ENCODE measurements at regions of chr3 and their contacts with region 1.

Region 1: GRCh38 chr3:98209244-98209643 is 42.7 kb downstream of the OR5H15 start:
- DNase-seq: no peak
- ATAC-seq: no peak
- H3K4me3 ChIP-seq: no peak overlapping the region
- H3K27ac ChIP-seq: no peak overlapping the region
- H3K4me1 ChIP-seq: no peaks in the 10 kb centered on the region
- H3K27me3 ChIP-seq: no peaks in the 10 kb centered on the region
- CTCF ChIP-seq: no peak
- POLR2A ChIP-seq: no peak

Region 2: DNA sequence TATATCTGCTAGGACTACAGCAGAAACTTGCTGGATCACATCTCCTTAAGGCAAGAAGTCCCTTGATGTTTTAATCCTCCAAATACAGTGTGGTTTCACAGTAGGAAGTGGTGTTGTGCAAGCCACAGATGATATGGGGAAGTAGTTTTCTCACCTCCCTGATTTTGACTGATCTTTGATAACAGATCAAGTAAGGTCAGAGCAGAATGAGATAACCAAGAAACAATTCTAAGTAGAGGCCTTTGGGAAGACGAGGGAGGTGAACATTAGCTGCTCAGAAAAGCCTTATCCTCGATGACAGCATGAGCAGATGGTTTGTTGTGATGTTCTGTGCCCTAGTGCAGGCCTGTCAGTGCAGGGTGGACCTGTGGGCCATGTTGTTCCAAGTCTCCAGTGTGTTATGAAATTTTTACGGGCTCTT is 298.3 kb before region 1 on chr3:
- intact Hi-C with region 1: no loop called
- DNase-seq: no peak
- ATAC-seq: peak in 2 of 4 donors; percentile 19 to 37
- H3K4me3 ChIP-seq: no peak overlapping the region
- H3K27ac ChIP-seq: no peak overlapping the region
- H3K4me1 ChIP-seq: no peaks in the 10 kb centered on the region
- H3K27me3 ChIP-seq: no peaks in the 10 kb centered on the region
- CTCF ChIP-seq: no peak
- POLR2A ChIP-seq: no peak

Region 3: DNA sequence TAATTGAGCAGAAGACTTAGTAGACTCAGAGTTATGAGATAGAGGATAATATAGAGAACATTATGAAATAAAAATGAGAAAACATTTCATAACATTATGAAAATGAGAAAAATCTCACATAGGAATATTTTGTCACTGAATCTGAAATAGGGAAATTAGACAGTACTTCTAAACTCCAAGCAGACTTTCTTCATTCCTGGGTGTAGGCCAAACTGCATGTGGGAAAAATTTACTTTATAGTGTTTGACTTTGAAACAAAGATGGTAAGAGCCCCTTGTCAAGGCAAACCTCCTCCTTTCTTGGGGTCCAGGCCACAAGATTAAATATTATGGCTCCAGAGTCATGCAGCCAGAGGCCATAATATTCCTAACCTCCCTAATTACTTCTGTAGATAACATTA is 68.7 kb before region 1 on chr3:
- intact Hi-C with region 1: no loop called
- DNase-seq: no peak
- ATAC-seq: no peak
- H3K4me3 ChIP-seq: no peak overlapping the region
- H3K27ac ChIP-seq: no peak overlapping the region
- H3K4me1 ChIP-seq: no peaks in the 10 kb centered on the region
- H3K27me3 ChIP-seq: no peaks in the 10 kb centered on the region
- CTCF ChIP-seq: no peak
- POLR2A ChIP-seq: no peak

Region 4: DNA sequence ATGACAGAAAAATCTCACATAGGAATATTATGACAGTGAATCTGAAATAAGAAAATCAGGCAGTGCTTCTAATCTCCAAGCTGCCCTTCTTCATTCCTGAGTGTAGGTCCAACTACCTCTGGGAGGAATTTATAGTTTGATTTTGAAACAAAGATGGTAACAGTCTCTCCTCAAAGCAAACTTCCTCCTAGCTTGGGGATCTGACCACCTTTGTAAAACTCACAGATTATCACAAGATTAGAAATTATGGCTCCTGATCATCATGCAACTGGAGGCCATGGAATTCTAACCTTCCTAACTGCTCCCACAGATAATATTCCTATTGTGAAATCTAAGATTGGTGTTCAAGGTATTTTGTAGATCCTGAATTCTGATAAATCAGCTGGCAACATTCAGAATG is 54.6 kb before region 1 on chr3:
- intact Hi-C with region 1: loop called in 1 of 2 experiments (anchors 2 kb)
- DNase-seq: no peak
- ATAC-seq: no peak
- H3K4me3 ChIP-seq: no peak overlapping the region
- H3K27ac ChIP-seq: no peak overlapping the region
- H3K4me1 ChIP-seq: no peaks in the 10 kb centered on the region
- H3K27me3 ChIP-seq: no peaks in the 10 kb centered on the region
- CTCF ChIP-seq: no peak
- POLR2A ChIP-seq: no peak

Region 5: GRCh38 chr3:98440283-98440942 is 231.2 kb after region 1 on chr3:
- intact Hi-C with region 1: no loop called
- DNase-seq: no peak
- ATAC-seq: no peak
- H3K4me3 ChIP-seq: no peak overlapping the region
- H3K27ac ChIP-seq: no peak overlapping the region
- H3K4me1 ChIP-seq: no peaks in the 10 kb centered on the region
- H3K27me3 ChIP-seq: no peaks in the 10 kb centered on the region
- CTCF ChIP-seq: no peak
- POLR2A ChIP-seq: no peak

Measured in right lobe of liver (tissue), 6 donors.